HCT116 (cell line): ENCODE measurements at regions of chr12 and their contacts with region 1.

Region 1: GRCh38 chr12:66860752-66861750 is 182.2 kb upstream of the GRIP1 start:
- DNase-seq: peak; percentile 23
- ATAC-seq: peak; percentile 46; the same call in 1 of the 2 replicates
- H3K4me3 ChIP-seq: no peak overlapping the region
- H3K27ac ChIP-seq: no peak overlapping the region
- H3K4me1 ChIP-seq: no peaks in the 10 kb centered on the region
- H3K27me3 ChIP-seq: peaks cover 11% of the 10 kb centered on the region; the same call in 1 of the 2 replicates
- CTCF ChIP-seq: peak; percentile 65 to 92 (median 87)
- POLR2A ChIP-seq: no peak
- RAD21 ChIP-seq: peak; percentile 74

Region 2: GRCh38 chr12:66352197-66352596 is 508.9 kb before region 1 on chr12:
- CTCF ChIA-PET with region 1: no interaction called
- POLR2A ChIA-PET with region 1: no interaction called
- RAD21 ChIA-PET with region 1: no interaction called
- intact Hi-C with region 1: loop called (anchors 10 kb)
- DNase-seq: peak; percentile 19
- ATAC-seq: peak; percentile 93
- H3K4me3 ChIP-seq: no peak overlapping the region
- H3K27ac ChIP-seq: no peak overlapping the region
- H3K4me1 ChIP-seq: no peaks in the 10 kb centered on the region
- H3K27me3 ChIP-seq: no peaks in the 10 kb centered on the region
- CTCF ChIP-seq: peak; percentile 52 to 66 (median 63); a peak in 5 of 6 replicates
- POLR2A ChIP-seq: no peak
- RAD21 ChIP-seq: peak; percentile 60

Region 3: DNA sequence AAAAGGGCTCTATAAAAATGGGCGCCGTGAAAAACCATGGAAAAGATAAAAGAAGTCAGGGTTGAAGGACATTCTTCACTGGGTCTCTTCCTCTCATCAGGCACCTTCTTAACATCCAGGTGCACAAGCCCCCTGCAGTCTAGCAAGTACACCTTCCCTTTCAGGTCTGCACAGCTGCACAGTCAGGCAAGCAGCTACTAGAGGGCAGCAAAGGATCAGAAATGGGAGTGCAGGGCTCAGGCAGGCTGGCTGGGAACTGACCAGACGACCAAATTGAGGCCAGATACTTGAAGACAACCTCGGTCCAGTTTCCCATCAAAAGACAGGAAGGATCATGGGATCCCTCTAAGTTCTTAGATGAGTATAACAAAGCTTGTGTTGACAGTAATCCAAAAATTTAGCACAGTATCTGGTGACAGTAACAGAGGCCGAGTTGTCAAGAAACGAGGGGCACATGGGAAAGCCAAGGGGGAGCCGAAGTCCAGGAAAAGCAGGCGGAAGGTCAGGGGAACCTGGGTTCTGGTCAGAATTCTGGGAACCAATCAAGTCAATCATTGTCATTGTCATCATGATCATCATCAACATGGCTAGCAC is 172.1 kb before region 1 on chr12:
- CTCF ChIA-PET with region 1: no interaction called
- POLR2A ChIA-PET with region 1: no interaction called
- RAD21 ChIA-PET with region 1: no interaction called
- intact Hi-C with region 1: loop called (anchors 1 kb)
- DNase-seq: peak; percentile 52
- ATAC-seq: peak; percentile 98
- H3K4me3 ChIP-seq: no peak overlapping the region
- H3K27ac ChIP-seq: no peak overlapping the region
- H3K4me1 ChIP-seq: no peaks in the 10 kb centered on the region
- H3K27me3 ChIP-seq: peaks cover 41% of the 10 kb centered on the region
- CTCF ChIP-seq: peak; percentile 58 to 72 (median 70); a peak in 5 of 6 replicates
- POLR2A ChIP-seq: no peak
- RAD21 ChIP-seq: peak; percentile 77

Region 4: GRCh38 chr12:66876466-66876865 is 15.4 kb after region 1 on chr12:
- CTCF ChIA-PET with region 1: no interaction called
- POLR2A ChIA-PET with region 1: no interaction called
- RAD21 ChIA-PET with region 1: no interaction called
- intact Hi-C with region 1: no loop called
- DNase-seq: no peak
- ATAC-seq: no peak
- H3K4me3 ChIP-seq: no peak overlapping the region
- H3K27ac ChIP-seq: no peak overlapping the region
- H3K4me1 ChIP-seq: no peaks in the 10 kb centered on the region
- H3K27me3 ChIP-seq: peaks cover 38% of the 10 kb centered on the region
- CTCF ChIP-seq: no peak
- POLR2A ChIP-seq: no peak
- RAD21 ChIP-seq: no peak